Naive thymus-derived CD4-positive, alpha-beta T cell (primary cell): ENCODE measurements at regions of chr10 and their contacts with region 1.

Region 1: GRCh38 chr10:13299437-13300287 is at the start of gene PHYH:
- DNase-seq: peak; percentile 70 to 88 (median 78)
- ATAC-seq: peak; percentile 77
- H3K4me3 ChIP-seq: peak within 1 kb of the TSS; percentile 69
- H3K4me3 Mint-ChIP-seq: peak within 1 kb of the TSS; percentile 70 to 96 (median 86)
- H3K27ac ChIP-seq: peak within 1 kb of the TSS; percentile 95
- H3K27ac Mint-ChIP-seq: peak within 1 kb of the TSS; percentile 92 to 99 (median 97)
- H3K4me1 ChIP-seq: peaks cover 16 to 19% of the 10 kb centered on the region in 2 donors
- H3K4me1 Mint-ChIP-seq: peaks cover 13 to 34% (median 22%) of the 10 kb centered on the region in 7 donors
- H3K27me3 ChIP-seq: no peaks in the 10 kb centered on the region
- H3K27me3 Mint-ChIP-seq: no peaks in the 10 kb centered on the region
- total RNA-seq, gene PHYH: 11.2 to 17.7 (median 13.2) TPM

Region 2: GRCh38 chr10:12068449-12069269 is 1231.0 kb before region 1 on chr10 and contains the start of gene DHTKD1:
- CTCF ChIA-PET with region 1: no interaction called
- POLR2A ChIA-PET with region 1: no interaction called
- intact Hi-C with region 1: loop called in 1 of 2 experiments (anchors 5 kb)
- DNase-seq: peak; percentile 96 to 100 (median 98)
- ATAC-seq: peak; percentile 99
- H3K4me3 ChIP-seq: peak within 1 kb of the TSS; percentile 85
- H3K4me3 Mint-ChIP-seq: peak within 1 kb of the TSS; percentile 84 to 92 (median 88)
- H3K27ac ChIP-seq: peak within 1 kb of the TSS; percentile 85
- H3K27ac Mint-ChIP-seq: peak within 1 kb of the TSS; percentile 85 to 99 (median 95)
- H3K4me1 ChIP-seq: peaks cover 6 to 15% of the 10 kb centered on the region in 2 donors
- H3K4me1 Mint-ChIP-seq: peaks cover 12 to 27% (median 20%) of the 10 kb centered on the region in 7 donors
- H3K27me3 ChIP-seq: no peaks in the 10 kb centered on the region
- H3K27me3 Mint-ChIP-seq: no peaks in the 10 kb centered on the region
- total RNA-seq, gene DHTKD1: 10.8 to 25.9 (median 12.5) TPM

Region 3: DNA sequence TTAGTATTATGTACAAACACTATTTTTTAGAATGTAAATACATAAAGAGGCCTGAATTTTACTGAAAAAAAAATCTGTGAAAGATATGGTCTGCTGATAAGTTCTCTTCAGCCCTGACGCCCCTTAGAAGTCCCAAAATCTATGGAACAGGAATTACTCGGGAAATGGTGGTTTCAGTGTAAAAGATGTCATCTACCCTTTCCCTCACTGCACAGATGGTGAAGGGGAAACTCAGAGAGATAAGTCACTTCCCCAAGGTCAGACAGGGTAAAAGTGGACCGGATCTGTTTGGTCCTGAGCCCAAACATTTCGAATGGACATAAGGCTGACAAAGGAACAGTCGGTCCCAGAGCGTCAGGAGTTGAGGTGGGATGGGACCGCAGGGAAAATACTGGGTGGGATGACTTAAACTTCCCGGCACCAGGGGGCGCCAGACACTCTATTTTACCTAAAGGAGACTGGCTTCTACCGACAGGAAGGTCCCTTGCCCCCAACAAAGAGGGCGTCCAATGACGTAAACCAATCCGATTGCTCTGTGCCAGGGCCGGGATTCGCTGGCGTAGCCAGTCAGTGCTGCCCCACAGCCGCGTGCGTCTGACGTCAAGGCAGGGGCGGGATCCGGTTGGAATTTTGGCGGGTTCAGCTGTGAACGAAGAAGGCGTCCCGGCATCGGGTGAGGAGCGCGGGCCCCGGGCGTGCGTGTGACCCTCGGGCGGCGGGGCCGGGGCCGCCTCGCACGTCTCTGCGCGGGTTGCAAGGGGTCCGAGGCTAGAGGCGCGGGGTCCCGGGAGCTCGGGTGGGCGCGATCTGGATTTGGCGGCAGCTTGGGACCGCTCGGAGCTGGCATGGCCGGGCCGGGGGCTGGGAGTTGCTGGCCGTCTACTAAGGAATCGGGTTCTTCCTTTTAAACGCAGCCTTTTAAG is 138.5 kb before region 1 on chr10 and contains the start of gene MCM10:
- CTCF ChIA-PET with region 1: interaction called, 15 read pairs
- POLR2A ChIA-PET with region 1: interaction called, 8 read pairs
- intact Hi-C with region 1: loop called (anchors 1 kb)
- DNase-seq: peak; percentile 86 to 99 (median 96)
- ATAC-seq: peak; percentile 100
- H3K4me3 ChIP-seq: peak within 1 kb of the TSS; percentile 47
- H3K4me3 Mint-ChIP-seq: peak within 1 kb of the TSS; percentile 64 to 93 (median 88)
- H3K27ac ChIP-seq: no peak within 1 kb of the TSS
- H3K27ac Mint-ChIP-seq: peak within 1 kb of the TSS; percentile 44 to 89 (median 74)
- H3K4me1 ChIP-seq: peaks cover 6 to 10% of the 10 kb centered on the region in 2 donors
- H3K4me1 Mint-ChIP-seq: peaks cover 3 to 38% (median 19%) of the 10 kb centered on the region in 7 donors
- H3K27me3 ChIP-seq: no peaks in the 10 kb centered on the region
- H3K27me3 Mint-ChIP-seq: peaks cover 0 to 2% (median 0%) of the 10 kb centered on the region in 5 donors
- total RNA-seq, gene MCM10: 0.08 to 41.8 (median 0.42) TPM

Region 4: DNA sequence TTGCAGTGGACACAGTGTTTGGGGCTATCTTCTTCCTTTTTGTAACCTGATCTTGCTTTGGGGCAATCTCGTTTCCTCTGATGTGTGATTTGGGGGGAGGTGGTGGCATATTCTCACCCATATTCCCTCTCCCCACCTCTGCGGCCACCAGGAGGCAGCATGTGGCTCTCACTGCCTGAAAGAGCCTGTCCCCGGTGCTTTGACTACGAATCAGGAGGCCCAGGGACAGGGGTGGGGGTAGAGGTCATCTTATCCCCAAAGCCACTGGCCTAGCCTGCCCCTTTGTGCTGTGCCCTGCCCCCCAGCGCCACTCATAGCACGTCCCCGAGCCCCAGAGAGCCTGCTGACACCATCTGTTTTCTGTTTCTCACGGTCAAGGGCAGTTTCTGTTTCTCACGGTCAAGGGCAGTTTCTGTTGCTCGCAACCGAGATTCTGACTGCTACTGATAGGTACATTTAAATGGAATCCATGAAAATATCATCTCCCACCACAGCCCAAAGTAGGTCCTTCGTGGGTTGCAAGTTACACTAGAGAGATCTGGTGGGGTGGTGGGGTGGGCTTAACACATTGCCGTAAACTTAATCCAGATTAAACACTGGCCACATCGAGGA is 28.0 kb before region 1 on chr10:
- CTCF ChIA-PET with region 1: no interaction called
- POLR2A ChIA-PET with region 1: interaction called, 5 read pairs
- intact Hi-C with region 1: loop called (anchors 1 kb)
- DNase-seq: peak; percentile 21 to 57 (median 47)
- ATAC-seq: peak; percentile 77
- H3K4me3 ChIP-seq: no peak overlapping the region
- H3K4me3 Mint-ChIP-seq: no peak overlapping the region
- H3K27ac ChIP-seq: no peak overlapping the region
- H3K27ac Mint-ChIP-seq: peak overlapping the region in 3 of 9 donors; percentile 39 to 45 (median 43)
- H3K4me1 ChIP-seq: peaks cover 0 to 7% of the 10 kb centered on the region in 2 donors
- H3K4me1 Mint-ChIP-seq: peaks cover 0 to 16% (median 6%) of the 10 kb centered on the region in 7 donors
- H3K27me3 ChIP-seq: no peaks in the 10 kb centered on the region
- H3K27me3 Mint-ChIP-seq: no peaks in the 10 kb centered on the region

Region 5: DNA sequence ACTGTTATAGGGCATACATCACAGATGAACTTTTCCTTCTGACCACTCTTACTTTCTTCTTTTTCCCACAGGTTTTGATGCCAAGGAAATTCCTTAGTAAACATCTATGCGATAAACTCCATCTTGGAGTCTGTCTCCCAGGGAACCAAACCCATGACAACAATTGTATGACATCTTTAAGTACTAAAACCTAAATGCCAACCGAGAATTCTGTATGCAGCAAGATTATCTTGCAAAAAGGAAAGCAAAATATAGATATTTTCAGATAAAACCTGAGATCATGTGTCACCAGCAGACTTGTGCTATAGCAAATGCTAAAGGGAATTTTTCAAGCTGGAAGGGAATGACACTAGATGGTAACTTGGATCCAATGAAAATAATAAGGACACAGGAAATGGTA is 251.1 kb after region 1 on chr10:
- CTCF ChIA-PET with region 1: no interaction called
- POLR2A ChIA-PET with region 1: no interaction called
- intact Hi-C with region 1: no loop called
- DNase-seq: no peak
- ATAC-seq: no peak
- H3K4me3 ChIP-seq: no peak overlapping the region
- H3K4me3 Mint-ChIP-seq: no peak overlapping the region
- H3K27ac ChIP-seq: no peak overlapping the region
- H3K27ac Mint-ChIP-seq: no peak overlapping the region
- H3K4me1 ChIP-seq: no peaks in the 10 kb centered on the region
- H3K4me1 Mint-ChIP-seq: no peaks in the 10 kb centered on the region
- H3K27me3 ChIP-seq: no peaks in the 10 kb centered on the region
- H3K27me3 Mint-ChIP-seq: peaks cover 21 to 52% (median 43%) of the 10 kb centered on the region in 5 donors

Region 6: GRCh38 chr10:14571866-14572507 is 1272.3 kb after region 1 on chr10:
- CTCF ChIA-PET with region 1: no interaction called
- POLR2A ChIA-PET with region 1: no interaction called
- intact Hi-C with region 1: loop called in 1 of 2 experiments (anchors 5 kb)
- DNase-seq: peak in 8 of 9 donors; percentile 47 to 94 (median 90)
- ATAC-seq: peak; percentile 80
- H3K4me3 ChIP-seq: peak overlapping the region; percentile 67
- H3K4me3 Mint-ChIP-seq: peak overlapping the region; percentile 86 to 98 (median 96)
- H3K27ac ChIP-seq: peak overlapping the region; percentile 87
- H3K27ac Mint-ChIP-seq: peak overlapping the region; percentile 93 to 100 (median 99)
- H3K4me1 ChIP-seq: peaks cover 40 to 53% of the 10 kb centered on the region in 2 donors
- H3K4me1 Mint-ChIP-seq: peaks cover 42 to 88% (median 79%) of the 10 kb centered on the region in 7 donors
- H3K27me3 ChIP-seq: no peaks in the 10 kb centered on the region
- H3K27me3 Mint-ChIP-seq: no peaks in the 10 kb centered on the region